ENCODE measurements at regions of chr11 and their contacts with region 1.

Region 1: GRCh38 chr11:65606876-65607613 is 7.0 kb downstream of the MAP3K11 start:
- DNase-seq: peak; percentile 74 to 97
- H3K4me3 ChIP-seq: peak overlapping the region; percentile 40 to 43
- H3K27ac ChIP-seq: peak overlapping the region; percentile 73 to 80
- H3K4me1 ChIP-seq: peaks cover 0 to 27% of the 10 kb centered on the region in 2 donors
- H3K27me3 ChIP-seq: no peaks in the 10 kb centered on the region
- CTCF ChIP-seq: no peak

Region 2: GRCh38 chr11:65575568-65576231 is 31.3 kb before region 1 on chr11 and contains the start of gene EHBP1L1:
- intact Hi-C with region 1: loop called (anchors 2 kb)
- DNase-seq: peak in 1 of 2 donors; percentile 89
- H3K4me3 ChIP-seq: peak within 1 kb of the TSS; percentile 95 to 98
- H3K27ac ChIP-seq: peak within 1 kb of the TSS; percentile 96 to 99
- H3K4me1 ChIP-seq: peaks cover 28 to 44% of the 10 kb centered on the region in 2 donors
- H3K27me3 ChIP-seq: no peaks in the 10 kb centered on the region
- CTCF ChIP-seq: no peak
- total RNA-seq, gene EHBP1L1: 418 TPM

Measured in ascending aorta (tissue), 2 donors.